ENCODE measurements at regions of chr1 and their contacts with region 1.

Region 1: DNA sequence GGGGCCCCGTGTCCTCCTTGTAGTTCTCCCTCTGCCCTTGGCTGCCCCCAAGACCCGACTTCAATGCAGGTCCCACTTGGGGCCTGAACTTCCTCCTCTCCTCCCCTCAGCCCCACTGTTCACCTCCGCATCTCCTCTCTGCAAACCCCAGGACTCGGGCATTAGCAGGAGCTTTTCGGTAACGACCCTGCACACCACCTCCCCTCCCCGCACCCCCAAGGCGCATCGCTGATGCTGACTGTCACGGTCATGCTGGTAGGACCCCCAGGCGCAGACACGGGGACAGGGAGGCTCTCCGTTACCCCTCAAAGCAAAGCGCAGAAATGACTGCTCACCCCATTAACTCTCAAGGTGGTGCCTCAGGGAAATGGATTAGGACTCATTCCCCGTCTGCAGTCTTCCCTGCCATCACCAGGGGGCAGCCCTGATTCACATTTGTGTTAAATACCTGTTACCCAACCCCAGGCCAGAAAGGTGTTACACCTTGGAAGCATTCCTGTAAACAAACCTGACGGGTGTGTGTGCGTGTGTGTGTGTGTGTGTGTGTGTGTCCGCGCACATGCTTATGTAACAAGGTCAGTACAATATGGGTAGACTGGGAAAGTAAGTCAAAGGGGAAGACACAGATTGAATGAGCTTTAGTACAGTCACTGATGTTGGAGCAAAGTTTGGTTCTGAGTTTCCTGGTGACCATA is 6.4 kb upstream of the GUCA2B start:
- DNase-seq: peak; percentile 79
- H3K4me3 ChIP-seq: peak overlapping the region in 1 of 3 experiments; percentile 11
- H3K27ac ChIP-seq: no peak overlapping the region
- H3K4me1 ChIP-seq: peaks cover 20% of the 10 kb centered on the region
- H3K27me3 ChIP-seq: no peaks in the 10 kb centered on the region
- CTCF ChIP-seq: peak; percentile 91 to 98

Region 2: DNA sequence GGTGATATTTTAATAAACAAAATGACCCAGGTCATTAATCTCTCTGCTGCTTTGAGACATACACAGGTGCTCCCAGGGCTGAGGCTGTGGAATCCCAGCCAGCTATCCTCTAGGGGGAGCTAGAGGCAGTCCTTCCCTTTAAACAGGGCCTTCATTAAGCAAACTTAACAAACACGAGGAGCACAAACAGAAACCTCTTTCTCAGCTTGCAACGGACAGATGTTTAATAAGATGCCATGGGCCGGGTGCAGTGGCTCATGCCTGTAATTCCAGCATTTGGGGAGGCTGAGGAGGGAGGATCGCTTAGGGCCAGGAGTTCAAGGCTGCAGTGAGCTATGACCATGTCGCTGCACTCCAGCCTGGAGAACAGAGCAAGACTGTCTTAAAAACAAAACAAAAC is 334.7 kb before region 1 on chr1:
- CTCF ChIA-PET with region 1: no interaction called
- dilution Hi-C with region 1: no loop called
- in situ Hi-C with region 1: loop called in 1 of 2 experiments (anchors 25 kb)
- intact Hi-C with region 1: loop called (anchors 1 kb)
- DNase-seq: peak; percentile 59
- H3K4me3 ChIP-seq: no peak overlapping the region
- H3K27ac ChIP-seq: no peak overlapping the region
- H3K4me1 ChIP-seq: peaks cover 3% of the 10 kb centered on the region
- H3K27me3 ChIP-seq: no peaks in the 10 kb centered on the region
- CTCF ChIP-seq: peak; percentile 77 to 82

Region 3: DNA sequence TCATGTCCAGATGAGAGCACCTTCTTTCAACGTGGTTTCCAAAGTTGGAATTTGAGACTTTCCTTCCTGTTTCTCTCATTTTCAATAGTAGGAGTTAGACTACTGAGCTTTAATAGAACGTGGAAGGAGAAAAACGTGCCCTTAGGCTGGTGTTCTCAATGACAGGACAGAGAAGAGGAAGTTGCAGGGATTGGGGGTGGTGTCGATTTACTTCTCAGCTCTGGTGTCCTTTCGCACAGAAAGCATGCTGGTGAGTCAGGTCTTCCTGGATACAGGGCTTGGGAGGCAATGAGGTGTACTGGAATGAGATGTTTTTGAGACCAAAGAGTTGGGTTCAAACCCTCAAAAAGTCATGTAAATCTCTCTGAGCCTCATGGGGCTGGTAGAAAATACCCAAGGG is 295.2 kb before region 1 on chr1:
- CTCF ChIA-PET with region 1: no interaction called
- dilution Hi-C with region 1: no loop called
- in situ Hi-C with region 1: no loop called
- intact Hi-C with region 1: no loop called
- DNase-seq: peak; percentile 80
- H3K4me3 ChIP-seq: no peak overlapping the region
- H3K27ac ChIP-seq: no peak overlapping the region
- H3K4me1 ChIP-seq: peaks cover 49% of the 10 kb centered on the region
- H3K27me3 ChIP-seq: no peaks in the 10 kb centered on the region
- CTCF ChIP-seq: no peak

Region 4: GRCh38 chr1:42335050-42335808 is 188.5 kb after region 1 on chr1 and contains the start of gene FOXJ3:
- CTCF ChIA-PET with region 1: no interaction called
- dilution Hi-C with region 1: no loop called
- in situ Hi-C with region 1: no loop called
- intact Hi-C with region 1: loop called (anchors 2 kb)
- DNase-seq: peak; percentile 94
- H3K4me3 ChIP-seq: peak within 1 kb of the TSS; percentile 90 to 99 (median 95)
- H3K27ac ChIP-seq: peak within 1 kb of the TSS; percentile 83
- H3K4me1 ChIP-seq: peaks cover 13% of the 10 kb centered on the region
- H3K27me3 ChIP-seq: no peaks in the 10 kb centered on the region
- CTCF ChIP-seq: peak in 1 of 2 donors; percentile 12
- total RNA-seq, gene FOXJ3: 40.8 to 43.1 TPM

Region 5: DNA sequence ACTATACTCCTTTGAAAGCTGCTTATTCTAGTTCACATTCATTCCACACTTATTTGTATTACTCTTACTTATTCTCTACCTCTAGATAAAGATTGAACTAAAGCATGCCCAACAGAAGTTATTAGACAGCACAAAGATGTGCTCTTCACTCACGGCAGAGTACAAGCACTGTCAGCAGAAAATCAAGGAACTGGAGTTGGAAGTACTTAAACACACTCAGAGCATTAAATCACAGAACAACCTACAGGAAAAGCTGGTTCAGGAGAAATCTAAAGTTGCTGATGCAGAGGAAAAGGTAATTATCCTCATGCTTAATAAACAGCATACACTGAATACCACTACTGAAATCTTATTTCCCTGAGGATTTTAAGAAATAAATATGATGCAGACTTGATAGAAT is 430.2 kb after region 1 on chr1:
- CTCF ChIA-PET with region 1: no interaction called
- dilution Hi-C with region 1: no loop called
- in situ Hi-C with region 1: no loop called
- intact Hi-C with region 1: loop called (anchors 5 kb)
- DNase-seq: no peak
- H3K4me3 ChIP-seq: no peak overlapping the region
- H3K27ac ChIP-seq: no peak overlapping the region
- H3K4me1 ChIP-seq: no peaks in the 10 kb centered on the region
- H3K27me3 ChIP-seq: no peaks in the 10 kb centered on the region
- CTCF ChIP-seq: no peak

Region 6: DNA sequence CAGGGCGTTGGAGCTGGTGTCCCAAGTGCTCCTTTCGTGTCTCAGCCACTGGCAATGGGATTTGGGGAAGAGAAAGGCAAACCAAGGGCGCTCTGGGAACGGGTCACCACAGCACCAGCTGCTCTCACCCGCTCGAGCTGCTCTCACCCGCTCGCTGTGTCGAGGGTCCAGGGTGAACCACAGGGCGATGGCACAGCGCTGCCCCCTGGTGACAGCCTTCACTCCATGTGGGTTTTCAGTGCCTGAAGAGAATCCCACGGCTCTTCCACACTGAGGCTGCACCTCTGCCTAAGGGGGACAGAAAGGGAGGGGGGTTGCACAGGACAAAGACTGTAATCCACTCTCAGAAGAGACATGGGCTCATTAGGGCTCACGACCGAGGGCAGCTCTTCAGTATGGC is 600.4 kb after region 1 on chr1:
- CTCF ChIA-PET with region 1: no interaction called
- dilution Hi-C with region 1: no loop called
- in situ Hi-C with region 1: no loop called
- intact Hi-C with region 1: loop called (anchors 2 kb)
- DNase-seq: no peak
- H3K4me3 ChIP-seq: no peak overlapping the region
- H3K27ac ChIP-seq: no peak overlapping the region
- H3K4me1 ChIP-seq: peaks cover 17% of the 10 kb centered on the region
- H3K27me3 ChIP-seq: no peaks in the 10 kb centered on the region
- CTCF ChIP-seq: peak; percentile 43 to 79

Measured in mammary epithelial cell (primary cell).